Activated CD4-positive, alpha-beta memory T cell treated with anti-CD3 and anti-CD28 coated beads for 36 hours (primary cell): ENCODE measurements at regions of chr1 and their contacts with region 1.

Region 1: DNA sequence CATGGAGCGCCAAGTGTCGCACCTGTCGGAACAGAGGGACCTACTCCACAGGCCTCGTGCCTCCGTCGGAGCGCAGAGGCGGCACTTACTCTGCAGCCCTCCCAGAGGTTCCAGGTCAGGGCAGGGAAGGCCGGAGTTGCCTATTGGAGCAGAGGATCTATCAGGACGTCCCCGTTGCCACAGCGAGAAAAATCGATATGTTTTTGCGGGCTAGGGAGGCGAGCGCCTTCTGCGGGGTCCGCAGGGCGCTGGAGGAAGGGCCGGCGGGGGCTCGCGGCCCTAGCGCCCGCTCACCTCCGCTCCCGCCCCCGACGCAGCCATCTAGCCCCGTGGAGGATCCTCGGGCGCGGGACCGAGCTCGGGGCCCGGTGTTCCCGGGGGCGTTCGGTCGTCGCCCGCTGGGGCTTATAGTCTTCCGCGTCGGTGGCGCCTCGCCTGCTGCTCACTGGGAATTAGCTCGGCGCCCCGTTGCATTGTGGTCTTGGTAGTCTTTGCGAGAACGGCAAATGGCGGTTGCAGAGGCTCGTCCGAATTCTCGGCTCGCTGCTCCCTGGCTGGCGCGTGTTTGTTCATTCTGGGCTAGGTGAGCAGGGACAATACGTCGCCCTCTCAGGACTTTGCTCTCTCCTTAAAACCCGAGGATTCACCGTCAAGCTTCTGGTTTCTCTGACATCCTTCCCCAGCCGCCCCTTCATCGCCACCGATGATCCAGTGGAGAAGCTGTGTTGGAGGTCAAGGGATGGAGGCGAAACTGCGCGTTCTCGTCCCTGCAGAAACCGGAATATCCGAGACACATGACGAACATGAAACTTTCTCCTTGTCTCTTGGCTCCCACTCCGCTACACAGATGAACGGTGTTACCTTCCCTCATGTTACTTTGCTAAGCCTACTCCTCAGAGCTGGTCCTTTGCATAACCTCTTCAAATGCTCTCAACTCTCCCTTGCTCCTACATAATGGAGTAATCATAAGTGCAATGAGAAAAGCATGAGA is at the start of gene JTB:
- DNase-seq: peak; percentile 92
- H3K4me3 Mint-ChIP-seq: peak within 1 kb of the TSS; percentile 90
- H3K27ac Mint-ChIP-seq: peak within 1 kb of the TSS; percentile 97
- H3K4me1 Mint-ChIP-seq: peaks cover 31% of the 10 kb centered on the region
- H3K27me3 Mint-ChIP-seq: no peaks in the 10 kb centered on the region
- total RNA-seq, gene JTB: 134 to 136 TPM

Region 2: GRCh38 chr1:153796791-153797659 is 180.5 kb before region 1 on chr1:
- CTCF ChIA-PET with region 1: interaction called, 12 read pairs
- POLR2A ChIA-PET with region 1: no interaction called
- intact Hi-C with region 1: no loop called
- DNase-seq: peak; percentile 89
- H3K4me3 Mint-ChIP-seq: no peak overlapping the region
- H3K27ac Mint-ChIP-seq: no peak overlapping the region
- H3K4me1 Mint-ChIP-seq: peaks cover 3% of the 10 kb centered on the region
- H3K27me3 Mint-ChIP-seq: peaks cover 1% of the 10 kb centered on the region

Region 3: GRCh38 chr1:153946622-153947241 is 30.8 kb before region 1 on chr1 and contains the start of gene DENND4B:
- CTCF ChIA-PET with region 1: interaction called, 7 read pairs
- POLR2A ChIA-PET with region 1: interaction called, 12 read pairs
- intact Hi-C with region 1: no loop called
- DNase-seq: peak; percentile 83
- H3K4me3 Mint-ChIP-seq: peak within 1 kb of the TSS; percentile 92
- H3K27ac Mint-ChIP-seq: peak within 1 kb of the TSS; percentile 97
- H3K4me1 Mint-ChIP-seq: peaks cover 25% of the 10 kb centered on the region
- H3K27me3 Mint-ChIP-seq: no peaks in the 10 kb centered on the region
- total RNA-seq, gene DENND4B: 98.1 to 108 TPM

Region 4: GRCh38 chr1:153958111-153958960 is 19.2 kb before region 1 on chr1 and contains the start of gene CRTC2:
- CTCF ChIA-PET with region 1: interaction called, 4 read pairs
- POLR2A ChIA-PET with region 1: interaction called, 19 read pairs
- intact Hi-C with region 1: loop called (anchors 1 kb)
- DNase-seq: peak; percentile 99
- H3K4me3 Mint-ChIP-seq: peak within 1 kb of the TSS; percentile 97
- H3K27ac Mint-ChIP-seq: peak within 1 kb of the TSS; percentile 96
- H3K4me1 Mint-ChIP-seq: peaks cover 51% of the 10 kb centered on the region
- H3K27me3 Mint-ChIP-seq: no peaks in the 10 kb centered on the region
- total RNA-seq, gene CRTC2: 60.8 to 78.0 TPM